Common myeloid progenitor, CD34-positive (primary cell): ENCODE measurements at regions of chr19 and their contacts with region 1.

Region 1: GRCh38 chr19:49148784-49149651 is 6.2 kb downstream of the HRC start:
- DNase-seq: peak; percentile 88 to 93 (median 91)
- H3K4me3 ChIP-seq: peak overlapping the region; percentile 45 to 77 (median 73)
- H3K27ac ChIP-seq: peak overlapping the region in 1 of 2 experiments; percentile 61
- H3K4me1 ChIP-seq: peaks cover 2 to 50% (median 44%) of the 10 kb centered on the region in 4 experiments
- H3K27me3 ChIP-seq: peaks cover 0 to 25% (median 1%) of the 10 kb centered on the region in 5 experiments

Region 2: DNA sequence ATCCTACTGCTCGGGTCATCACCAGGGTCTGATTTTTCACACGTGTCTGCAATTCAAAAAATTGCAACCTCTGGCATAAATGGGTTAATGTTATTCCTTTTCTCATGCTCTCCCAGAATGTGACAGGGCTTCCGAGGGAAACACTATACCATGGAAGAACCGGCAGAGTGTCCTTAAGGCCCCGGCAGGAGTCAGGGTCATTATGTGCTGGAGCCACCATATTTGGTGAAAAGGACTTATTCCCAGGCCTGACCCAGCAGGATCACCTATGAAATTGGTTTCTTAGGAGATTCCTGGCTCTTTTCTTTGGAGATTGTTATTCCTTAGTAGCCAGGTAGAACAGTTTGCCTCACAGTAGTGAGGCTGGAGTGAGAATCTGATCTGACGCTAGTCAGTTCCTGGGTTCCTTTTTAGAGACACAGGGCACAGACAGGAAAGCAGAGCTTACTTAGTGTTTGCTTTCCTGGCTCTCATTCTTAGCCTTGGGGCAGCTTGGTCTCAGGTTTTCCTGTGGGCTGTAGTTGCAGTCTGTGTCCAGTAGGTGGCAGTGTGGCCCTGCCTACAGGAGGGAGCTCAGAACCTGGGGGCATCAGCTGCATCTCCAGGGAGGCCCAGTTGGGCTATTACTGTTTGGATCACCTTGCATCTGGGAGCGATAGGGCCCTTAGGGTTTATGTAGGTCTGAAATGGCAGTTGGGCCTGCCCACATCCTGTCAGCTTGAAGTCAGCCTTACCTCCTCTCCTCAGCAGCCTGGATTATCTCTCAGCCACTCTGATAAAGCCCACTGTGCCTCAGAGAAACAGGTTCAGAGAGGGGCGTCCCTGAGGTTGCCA is 51.3 kb before region 1 on chr19:
- CTCF ChIA-PET with region 1: interaction called, 35 read pairs
- POLR2A ChIA-PET with region 1: no interaction called
- DNase-seq: peak; percentile 71 to 88 (median 81)
- H3K4me3 ChIP-seq: no peak overlapping the region
- H3K27ac ChIP-seq: no peak overlapping the region
- H3K4me1 ChIP-seq: no peaks in the 10 kb centered on the region
- H3K27me3 ChIP-seq: no peaks in the 10 kb centered on the region

Region 3: DNA sequence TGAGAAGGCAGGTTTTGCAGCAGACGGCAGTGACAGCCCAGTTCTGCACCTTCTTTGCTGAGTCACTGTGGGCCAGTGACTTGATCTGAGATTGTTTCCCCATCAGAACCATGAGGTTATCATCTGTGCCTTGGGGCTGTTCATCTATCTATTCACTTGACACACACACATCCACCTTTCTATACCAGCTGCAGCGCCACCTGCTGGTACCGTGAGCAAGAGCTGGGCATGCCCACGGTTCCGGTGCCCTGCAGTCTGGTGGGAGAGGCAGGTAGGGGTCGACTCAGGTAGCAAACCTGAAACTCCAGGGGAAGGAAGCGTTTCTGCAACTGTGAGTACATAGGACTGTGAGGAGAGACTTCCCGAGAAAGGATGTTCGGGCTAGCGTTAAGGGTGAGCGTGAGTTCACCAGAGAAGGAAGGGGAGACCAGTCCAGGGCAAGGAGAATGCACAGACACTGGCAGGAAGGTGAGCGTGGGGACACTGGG is 42.3 kb before region 1 on chr19:
- CTCF ChIA-PET with region 1: interaction called, 14 read pairs
- POLR2A ChIA-PET with region 1: no interaction called
- DNase-seq: peak; percentile 60 to 76 (median 69)
- H3K4me3 ChIP-seq: no peak overlapping the region
- H3K27ac ChIP-seq: no peak overlapping the region
- H3K4me1 ChIP-seq: no peaks in the 10 kb centered on the region
- H3K27me3 ChIP-seq: no peaks in the 10 kb centered on the region

Region 4: GRCh38 chr19:49118565-49119410 is 30.2 kb before region 1 on chr19 and contains the start of gene C19orf73:
- CTCF ChIA-PET with region 1: interaction called, 18 read pairs
- POLR2A ChIA-PET with region 1: interaction called, 13 read pairs
- DNase-seq: peak; percentile 95 to 98 (median 97)
- H3K4me3 ChIP-seq: peak within 1 kb of the TSS; percentile 45 to 81 (median 64)
- H3K27ac ChIP-seq: peak within 1 kb of the TSS; percentile 25 to 89
- H3K4me1 ChIP-seq: peaks cover 2 to 46% (median 33%) of the 10 kb centered on the region in 4 experiments
- H3K27me3 ChIP-seq: peaks cover 0 to 22% (median 11%) of the 10 kb centered on the region in 5 experiments

Region 5: DNA sequence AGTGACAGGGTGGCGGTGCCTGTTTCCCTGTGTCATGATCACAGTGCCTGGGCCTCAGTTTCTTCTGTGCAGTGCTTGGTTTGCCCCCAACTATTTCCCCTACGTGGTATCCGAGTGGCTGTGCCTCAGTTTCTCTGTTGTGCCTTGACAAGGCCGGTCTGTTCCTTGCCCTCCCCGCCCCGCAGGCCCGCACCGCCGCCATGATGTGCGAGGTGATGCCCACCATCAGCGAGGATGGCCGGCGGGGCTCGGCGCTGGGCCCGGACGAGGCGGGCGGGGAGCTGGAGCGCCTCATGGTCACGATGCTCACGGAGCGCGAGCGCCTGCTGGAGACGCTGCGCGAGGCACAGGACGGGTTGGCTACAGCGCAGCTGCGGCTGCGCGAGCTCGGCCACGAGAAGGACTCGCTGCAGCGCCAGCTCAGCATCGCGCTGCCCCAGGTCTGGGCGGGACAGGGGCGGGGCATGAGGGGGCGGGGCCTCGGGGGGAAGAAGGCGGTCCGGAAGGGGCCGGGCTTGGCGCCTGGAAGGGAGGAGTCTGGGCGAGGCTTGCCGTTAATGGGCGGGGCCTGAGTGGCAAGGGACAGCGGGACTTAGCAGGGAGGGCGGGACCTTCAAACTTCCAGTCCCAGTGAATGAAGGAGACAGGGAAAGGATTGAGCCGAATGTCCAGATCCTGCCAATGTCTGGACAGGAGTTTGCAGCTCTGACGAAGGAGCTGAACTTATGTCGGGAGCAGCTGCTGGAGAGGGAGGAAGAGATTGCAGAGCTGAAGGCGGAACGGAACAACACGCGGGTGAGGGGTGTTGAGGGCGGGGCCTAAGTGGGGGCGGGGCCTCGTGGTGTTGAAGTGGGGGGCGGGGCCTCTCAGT is 21.1 kb before region 1 on chr19:
- CTCF ChIA-PET with region 1: interaction called, 13 read pairs
- POLR2A ChIA-PET with region 1: interaction called, 3 read pairs
- DNase-seq: peak; percentile 93 to 97 (median 97)
- H3K4me3 ChIP-seq: peak overlapping the region in 6 of 7 experiments; percentile 48 to 82 (median 62)
- H3K27ac ChIP-seq: no peak overlapping the region
- H3K4me1 ChIP-seq: peaks cover 0 to 11% (median 6%) of the 10 kb centered on the region in 4 experiments
- H3K27me3 ChIP-seq: peaks cover 0 to 4% (median 0%) of the 10 kb centered on the region in 5 experiments

Region 6: DNA sequence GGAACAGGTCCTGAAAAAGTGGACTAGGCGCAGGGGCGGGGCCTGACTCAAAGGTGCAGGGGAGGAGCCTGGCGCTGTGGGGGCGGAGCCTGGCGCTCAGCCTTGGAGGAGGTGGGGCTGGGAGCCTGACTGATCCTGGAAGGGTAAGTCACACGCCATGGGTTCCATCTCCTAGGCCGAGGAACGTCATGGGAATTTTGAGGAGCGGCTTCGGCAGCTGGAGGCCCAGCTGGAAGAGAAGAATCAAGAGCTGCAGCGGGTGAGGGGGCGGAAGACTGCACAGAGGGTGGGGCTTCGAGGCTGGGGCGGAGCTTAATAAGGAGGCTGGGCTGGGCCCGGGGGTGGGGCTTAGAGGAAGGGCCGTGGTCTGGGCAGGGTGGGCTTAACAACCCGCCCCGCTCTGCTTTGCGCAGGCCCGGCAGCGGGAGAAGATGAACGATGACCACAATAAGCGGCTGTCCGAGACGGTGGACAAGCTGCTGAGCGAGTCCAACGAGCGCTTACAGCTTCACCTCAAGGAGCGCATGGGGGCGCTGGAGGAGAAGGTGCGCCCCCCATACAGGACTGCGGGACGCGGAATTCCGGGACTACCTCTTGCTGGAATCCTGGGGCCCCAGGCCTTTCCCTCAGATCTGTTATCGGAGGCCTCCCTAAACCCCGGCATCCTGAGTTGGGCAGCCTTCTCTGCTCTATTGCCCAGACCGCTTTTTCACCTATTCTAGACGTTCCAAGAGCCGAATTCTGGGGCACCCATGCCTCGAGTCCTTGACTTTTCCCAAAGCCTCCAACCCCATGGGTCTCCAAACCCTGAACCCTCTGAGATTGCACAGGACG is 15.2 kb before region 1 on chr19:
- CTCF ChIA-PET with region 1: interaction called, 15 read pairs
- POLR2A ChIA-PET with region 1: interaction called, 6 read pairs
- DNase-seq: peak; percentile 62 to 70 (median 63)
- H3K4me3 ChIP-seq: peak overlapping the region in 5 of 7 experiments; percentile 30 to 83 (median 61)
- H3K27ac ChIP-seq: no peak overlapping the region
- H3K4me1 ChIP-seq: peaks cover 0 to 19% (median 8%) of the 10 kb centered on the region in 4 experiments
- H3K27me3 ChIP-seq: peaks cover 0 to 5% (median 0%) of the 10 kb centered on the region in 5 experiments

Region 7: GRCh38 chr19:49200238-49200862 is 51.3 kb after region 1 on chr19:
- CTCF ChIA-PET with region 1: interaction called, 10 read pairs
- POLR2A ChIA-PET with region 1: no interaction called
- DNase-seq: peak; percentile 15 to 27 (median 18)
- H3K4me3 ChIP-seq: no peak overlapping the region
- H3K27ac ChIP-seq: no peak overlapping the region
- H3K4me1 ChIP-seq: no peaks in the 10 kb centered on the region
- H3K27me3 ChIP-seq: no peaks in the 10 kb centered on the region